Posterior cingulate gyrus (tissue), 11 donors: ENCODE measurements at regions of chr11 and their contacts with region 1.

Region 1: GRCh38 chr11:67317205-67317887 is 14.0 kb downstream of the SSH3 start:
- DNase-seq: peak; percentile 95 to 99 (median 98)

Region 2: DNA sequence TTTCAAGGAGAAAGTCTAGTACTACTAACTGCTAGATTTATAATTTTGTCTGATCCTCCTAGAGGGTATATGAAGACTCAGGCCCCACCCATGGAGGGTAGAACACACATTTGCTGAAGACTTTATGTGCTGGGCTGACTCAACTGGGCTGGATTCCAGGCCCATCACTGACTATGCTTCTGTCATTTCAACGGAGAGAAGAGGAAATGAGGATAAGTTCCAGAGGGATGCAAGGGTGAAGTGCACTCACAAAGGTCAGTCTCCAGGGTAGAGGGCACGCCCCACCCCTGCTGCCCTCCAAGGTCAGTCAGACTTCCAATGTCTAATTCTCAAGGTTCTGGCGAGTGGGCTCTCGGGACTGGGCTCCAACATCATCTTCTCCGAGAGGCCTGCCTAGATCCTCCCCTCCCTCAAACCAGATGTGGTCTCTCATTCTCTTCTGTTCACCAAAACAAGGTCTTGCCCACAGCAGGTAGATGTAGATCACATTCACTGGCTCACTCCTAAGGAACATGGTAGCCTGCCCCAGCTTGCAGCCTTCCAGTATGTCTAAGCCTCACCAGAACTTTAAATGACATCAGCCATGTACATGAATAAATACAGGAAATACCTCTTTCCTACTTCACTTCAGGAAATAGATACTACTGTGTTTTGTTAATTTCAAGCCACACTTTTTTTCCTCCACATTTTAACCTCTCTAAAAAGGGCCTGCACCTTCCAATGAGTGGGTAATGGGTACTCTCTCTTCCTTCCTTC is 349.5 kb before region 1 on chr11:
- intact Hi-C with region 1: loop called (anchors 10 kb)
- DNase-seq: peak in 1 of 10 donors; percentile 20

Region 3: GRCh38 chr11:67082035-67082791 is 235.1 kb before region 1 on chr11:
- intact Hi-C with region 1: loop called (anchors 5 kb)
- DNase-seq: no peak

Region 4: DNA sequence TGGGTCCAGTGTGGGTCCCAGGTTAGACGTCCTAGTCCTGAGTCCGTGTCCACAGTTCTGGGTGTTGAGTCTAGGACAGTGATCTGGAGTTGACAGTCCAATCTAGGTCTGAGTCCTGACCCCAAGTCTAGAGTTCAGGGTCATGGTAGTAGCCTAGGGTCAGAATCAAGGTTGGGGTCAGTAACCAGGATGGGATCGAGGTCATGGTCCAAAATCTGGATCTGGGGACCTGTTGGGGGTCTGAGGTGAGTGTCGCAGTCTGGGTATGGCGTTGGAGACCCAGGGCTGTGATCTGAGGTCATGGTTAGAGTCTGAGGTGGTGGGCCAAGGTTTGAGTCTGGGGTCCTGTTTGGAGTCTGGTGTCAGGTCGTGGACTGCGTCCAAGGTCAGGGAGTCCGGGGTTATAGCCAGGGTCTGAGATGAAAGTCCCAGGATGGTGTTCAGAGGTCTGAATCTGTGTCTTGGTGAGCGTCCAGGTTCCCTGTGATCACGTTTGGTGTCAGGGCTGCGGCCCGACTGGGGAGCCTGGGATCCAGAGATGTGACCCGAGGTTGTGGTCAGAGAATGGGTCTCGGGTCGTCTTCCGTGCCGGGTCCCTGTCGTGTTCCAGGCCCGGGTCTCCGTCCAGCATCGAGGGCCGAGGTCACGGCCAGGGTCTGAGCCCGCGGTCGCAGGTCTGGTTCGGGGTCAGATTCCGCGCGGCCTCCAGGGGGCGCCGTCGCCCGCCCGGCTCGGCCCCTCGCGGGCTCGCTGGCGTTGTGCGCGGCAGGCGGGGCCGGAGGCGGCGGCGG is 51.5 kb before region 1 on chr11:
- intact Hi-C with region 1: loop called (anchors 1 kb)
- DNase-seq: peak in 7 of 10 donors; percentile 69 to 97 (median 84)

Region 5: GRCh38 chr11:67600324-67601029 is 283.1 kb after region 1 on chr11:
- intact Hi-C with region 1: no loop called
- DNase-seq: peak in 1 of 10 donors; percentile 50